Activated CD4-positive, alpha-beta T cell treated with anti-CD3 and anti-CD28 coated beads for 36 hours (primary cell): ENCODE measurements at regions of chr17 and their contacts with region 1.

Region 1: DNA sequence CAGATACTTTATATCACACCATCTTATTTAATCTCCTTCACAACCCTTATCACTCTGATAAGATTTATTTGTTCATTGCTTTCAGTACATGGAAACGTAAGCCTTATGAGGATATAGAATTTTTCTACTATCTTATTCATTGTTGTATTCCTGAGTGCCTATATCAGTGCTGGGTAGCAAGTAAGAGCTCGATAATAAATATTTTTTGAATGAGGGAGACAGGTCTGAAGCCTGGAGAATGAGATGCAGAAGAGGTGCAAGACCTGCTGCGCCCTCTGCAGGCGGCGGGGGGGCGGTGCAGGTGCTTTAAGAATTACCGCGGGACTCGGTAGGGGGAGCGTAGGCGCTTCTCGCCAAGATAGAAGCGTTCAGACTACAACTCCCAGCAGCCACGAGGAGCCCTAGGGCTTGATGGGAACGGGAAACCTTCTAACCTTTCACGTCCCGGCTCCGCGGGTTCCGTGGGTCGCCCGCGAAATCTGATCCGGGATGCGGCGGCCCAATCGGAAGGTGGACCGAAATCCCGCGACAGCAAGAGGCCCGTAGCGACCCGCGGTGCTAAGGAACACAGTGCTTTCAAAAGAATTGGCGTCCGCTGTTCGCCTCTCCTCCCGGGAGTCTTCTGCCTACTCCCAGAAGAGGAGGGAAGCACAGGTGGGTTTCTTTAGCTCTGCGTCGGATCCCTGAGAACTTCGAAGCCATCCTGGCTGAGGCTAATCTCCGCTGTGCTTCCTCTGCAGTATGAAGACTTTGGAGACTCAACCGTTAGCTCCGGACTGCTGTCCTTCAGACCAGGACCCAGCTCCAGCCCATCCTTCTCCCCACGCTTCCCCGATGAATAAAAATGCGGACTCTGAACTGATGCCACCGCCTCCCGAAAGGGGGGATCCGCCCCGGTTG is at the start of gene WRAP53:
- DNase-seq: peak; percentile 97
- ATAC-seq: peak; percentile 81
- H3K4me3 Mint-ChIP-seq: peak within 1 kb of the TSS; percentile 83
- H3K27ac Mint-ChIP-seq: peak within 1 kb of the TSS; percentile 97
- H3K4me1 Mint-ChIP-seq: peaks cover 35% of the 10 kb centered on the region
- H3K27me3 Mint-ChIP-seq: no peaks in the 10 kb centered on the region
- total RNA-seq, gene WRAP53: 23.5 to 27.1 TPM

Region 2: DNA sequence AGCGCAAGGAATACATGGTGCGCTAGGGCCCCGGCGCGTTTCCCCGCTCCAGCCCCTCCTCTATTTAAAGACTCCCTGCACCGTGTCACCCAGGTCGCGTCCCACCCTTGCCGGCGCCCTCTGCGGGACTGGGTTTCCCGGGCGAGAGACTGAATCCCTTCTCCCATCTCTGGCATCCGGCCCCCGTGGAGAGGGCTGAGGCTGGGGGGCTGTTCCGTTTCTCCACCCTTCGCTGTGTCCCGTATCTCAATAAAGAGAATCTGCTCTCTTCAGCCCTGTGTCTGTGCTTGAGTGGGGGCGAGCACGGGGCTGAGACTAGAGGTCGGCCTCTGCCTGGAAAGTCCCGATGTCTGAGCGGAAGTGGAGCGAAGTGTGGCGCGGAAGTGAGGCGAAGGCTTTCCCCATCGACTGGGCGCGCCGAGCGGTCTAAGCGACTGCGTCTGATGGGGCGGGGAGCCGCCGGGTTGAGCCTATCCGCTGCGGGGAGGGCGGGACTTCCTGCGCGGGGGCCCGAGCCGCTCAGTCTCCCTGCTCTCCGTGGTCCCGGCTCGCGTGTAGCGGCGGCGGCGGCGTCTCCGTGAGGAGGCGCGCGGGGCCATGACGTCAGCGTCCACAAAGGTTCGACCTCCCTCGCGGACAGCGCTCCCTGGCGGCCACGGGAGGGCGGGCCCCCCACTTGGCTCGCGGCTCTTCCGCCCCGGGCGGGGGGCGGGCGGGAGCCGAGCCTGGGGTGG is 673.7 kb before region 1 on chr17:
- CTCF ChIA-PET with region 1: no interaction called
- POLR2A ChIA-PET with region 1: no interaction called
- intact Hi-C with region 1: loop called in 1 of 2 experiments (anchors 2 kb)
- DNase-seq: peak; percentile 99
- ATAC-seq: peak; percentile 88
- H3K4me3 Mint-ChIP-seq: peak overlapping the region; percentile 92
- H3K27ac Mint-ChIP-seq: peak overlapping the region; percentile 99
- H3K4me1 Mint-ChIP-seq: peaks cover 54% of the 10 kb centered on the region
- H3K27me3 Mint-ChIP-seq: no peaks in the 10 kb centered on the region

Region 3: GRCh38 chr17:7329374-7329996 is 358.7 kb before region 1 on chr17:
- CTCF ChIA-PET with region 1: interaction called, 4 read pairs
- POLR2A ChIA-PET with region 1: interaction called, 6 read pairs
- intact Hi-C with region 1: loop called in 1 of 2 experiments (anchors 1 kb)
- DNase-seq: peak; percentile 98
- ATAC-seq: peak; percentile 69
- H3K4me3 Mint-ChIP-seq: peak overlapping the region; percentile 89
- H3K27ac Mint-ChIP-seq: peak overlapping the region; percentile 96
- H3K4me1 Mint-ChIP-seq: peaks cover 44% of the 10 kb centered on the region
- H3K27me3 Mint-ChIP-seq: no peaks in the 10 kb centered on the region

Region 4: GRCh38 chr17:7515911-7516610 is 172.1 kb before region 1 on chr17:
- CTCF ChIA-PET with region 1: interaction called, 11 read pairs
- POLR2A ChIA-PET with region 1: no interaction called
- intact Hi-C with region 1: loop called in 1 of 2 experiments (anchors 5 kb)
- DNase-seq: no peak
- ATAC-seq: no peak
- H3K4me3 Mint-ChIP-seq: no peak overlapping the region
- H3K27ac Mint-ChIP-seq: no peak overlapping the region
- H3K4me1 Mint-ChIP-seq: no peaks in the 10 kb centered on the region
- H3K27me3 Mint-ChIP-seq: no peaks in the 10 kb centered on the region

Region 5: DNA sequence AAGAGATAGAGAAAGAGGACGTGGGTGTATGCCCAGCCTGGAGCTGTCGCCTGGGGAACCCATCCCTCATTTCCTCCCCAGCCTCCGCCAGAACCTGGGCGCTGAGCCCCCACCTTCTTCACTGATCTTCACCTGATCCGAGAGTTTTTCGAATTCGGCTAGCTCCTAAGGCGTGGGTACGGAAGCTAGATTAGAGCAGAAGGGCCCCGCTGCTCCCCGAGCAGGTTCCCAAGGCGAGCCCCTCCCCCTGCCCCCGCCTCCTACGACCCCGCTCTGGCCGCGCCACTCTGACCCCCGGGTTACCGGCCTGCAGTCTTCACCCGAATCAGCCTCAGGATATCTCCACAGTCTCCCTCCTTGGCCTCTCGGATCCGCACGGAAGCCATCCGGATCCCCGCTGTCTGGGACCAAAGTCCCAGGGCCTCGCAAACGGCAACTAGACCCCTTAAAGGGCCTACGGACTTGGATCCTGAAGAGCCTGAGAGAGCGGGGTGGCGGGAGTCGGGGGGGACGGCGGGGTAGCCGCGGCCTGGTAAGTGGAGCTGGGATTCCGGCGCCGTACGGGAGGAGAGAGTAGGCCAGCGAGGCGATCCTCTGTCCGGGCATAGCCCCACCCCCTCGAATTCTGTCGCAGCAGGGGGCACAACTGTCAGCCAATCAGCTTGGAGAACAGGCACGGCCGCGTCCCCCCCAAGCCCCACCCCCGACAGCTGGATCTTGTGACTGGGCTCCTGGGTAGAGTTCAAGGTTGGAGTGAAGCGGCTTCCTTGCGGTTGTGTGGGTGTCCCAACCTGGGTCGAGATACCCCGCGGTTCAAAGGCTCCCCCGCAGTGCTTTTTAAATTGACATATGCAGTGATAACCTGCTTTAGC is 60.7 kb before region 1 on chr17 and contains the start of gene SAT2:
- CTCF ChIA-PET with region 1: interaction called, 10 read pairs
- POLR2A ChIA-PET with region 1: interaction called, 5 read pairs
- intact Hi-C with region 1: loop called (anchors 1 kb)
- DNase-seq: peak; percentile 91
- ATAC-seq: peak; percentile 94
- H3K4me3 Mint-ChIP-seq: peak within 1 kb of the TSS; percentile 83
- H3K27ac Mint-ChIP-seq: peak within 1 kb of the TSS; percentile 78
- H3K4me1 Mint-ChIP-seq: peaks cover 11% of the 10 kb centered on the region
- H3K27me3 Mint-ChIP-seq: no peaks in the 10 kb centered on the region
- total RNA-seq, gene SAT2: 15.9 to 22.2 TPM

Region 6: GRCh38 chr17:7856883-7857723 is 168.9 kb after region 1 on chr17 and contains the start of gene NAA38:
- CTCF ChIA-PET with region 1: interaction called, 4 read pairs
- POLR2A ChIA-PET with region 1: interaction called, 8 read pairs
- intact Hi-C with region 1: loop called (anchors 1 to 5 kb)
- DNase-seq: peak; percentile 97
- ATAC-seq: peak; percentile 91
- H3K4me3 Mint-ChIP-seq: no peak within 1 kb of the TSS
- H3K27ac Mint-ChIP-seq: no peak within 1 kb of the TSS
- H3K4me1 Mint-ChIP-seq: peaks cover 18% of the 10 kb centered on the region
- H3K27me3 Mint-ChIP-seq: no peaks in the 10 kb centered on the region
- total RNA-seq, gene NAA38: 64.7 to 79.8 TPM

Region 7: DNA sequence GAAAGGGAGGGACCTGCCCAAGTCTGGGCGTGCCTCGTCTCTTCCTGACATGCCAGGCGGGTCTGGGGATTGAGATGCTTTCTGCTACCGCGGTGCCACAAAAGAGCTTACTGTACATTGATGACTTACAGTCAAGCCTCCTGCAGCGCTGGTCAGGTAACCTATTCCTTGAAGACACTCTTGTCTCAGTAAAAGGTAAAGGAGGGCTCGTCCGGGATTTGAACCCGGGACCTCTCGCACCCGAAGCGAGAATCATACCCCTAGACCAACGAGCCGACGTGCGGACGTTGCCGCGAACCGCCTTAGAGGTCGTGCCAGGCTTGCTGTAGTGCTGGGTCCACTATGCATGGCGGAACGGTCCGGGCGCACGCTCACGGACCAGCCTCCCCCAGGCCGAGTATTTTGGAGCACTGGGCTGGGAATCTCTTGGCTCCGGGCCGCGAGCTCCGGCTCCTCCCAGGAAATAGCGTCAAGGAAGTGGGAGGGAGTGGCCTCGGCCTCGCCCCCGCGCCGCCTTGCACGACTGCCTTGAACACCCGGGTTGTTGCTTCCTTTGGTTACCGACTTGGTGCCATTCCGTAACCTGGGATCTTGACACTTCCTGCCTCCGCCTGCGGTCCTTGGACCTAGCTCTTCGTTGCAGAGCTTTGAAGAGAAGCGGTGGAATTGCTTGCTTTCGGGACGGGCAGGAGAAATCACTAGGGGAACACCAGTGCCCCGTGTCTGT is 534.6 kb after region 1 on chr17:
- CTCF ChIA-PET with region 1: no interaction called
- POLR2A ChIA-PET with region 1: no interaction called
- intact Hi-C with region 1: loop called in 1 of 2 experiments (anchors 5 kb)
- DNase-seq: peak; percentile 94
- ATAC-seq: peak; percentile 35
- H3K4me3 Mint-ChIP-seq: peak overlapping the region; percentile 98
- H3K27ac Mint-ChIP-seq: peak overlapping the region; percentile 98
- H3K4me1 Mint-ChIP-seq: peaks cover 54% of the 10 kb centered on the region
- H3K27me3 Mint-ChIP-seq: no peaks in the 10 kb centered on the region